IMR-90 (cell line): ENCODE measurements at regions of chr15 and their contacts with region 1.

Region 1: GRCh38 chr15:33980159-33980558 is 11.9 kb downstream of the CHRM5 start:
- DNase-seq: no peak
- ATAC-seq: no peak
- H3K4me3 ChIP-seq: no peak overlapping the region
- H3K27ac ChIP-seq: no peak overlapping the region
- H3K4me1 ChIP-seq: peaks cover 8% of the 10 kb centered on the region
- H3K27me3 ChIP-seq: no peaks in the 10 kb centered on the region
- CTCF ChIP-seq: no peak
- POLR2A ChIP-seq: no peak
- RAD21 ChIP-seq: no peak

Region 2: GRCh38 chr15:33852557-33852956 is 127.6 kb before region 1 on chr15:
- CTCF ChIA-PET with region 1: no interaction called
- POLR2A ChIA-PET with region 1: no interaction called
- dilution Hi-C with region 1: no loop called
- in situ Hi-C with region 1: no loop called
- intact Hi-C with region 1: loop called (anchors 5 kb)
- DNase-seq: peak; percentile 78
- ATAC-seq: peak; percentile 82
- H3K4me3 ChIP-seq: no peak overlapping the region
- H3K27ac ChIP-seq: no peak overlapping the region
- H3K4me1 ChIP-seq: no peaks in the 10 kb centered on the region
- H3K27me3 ChIP-seq: no peaks in the 10 kb centered on the region
- CTCF ChIP-seq: no peak
- POLR2A ChIP-seq: no peak
- RAD21 ChIP-seq: no peak